Right ventricle myocardium inferior (tissue), 1 donor: ENCODE measurements at regions of chr1 and their contacts with region 1.

Region 1: DNA sequence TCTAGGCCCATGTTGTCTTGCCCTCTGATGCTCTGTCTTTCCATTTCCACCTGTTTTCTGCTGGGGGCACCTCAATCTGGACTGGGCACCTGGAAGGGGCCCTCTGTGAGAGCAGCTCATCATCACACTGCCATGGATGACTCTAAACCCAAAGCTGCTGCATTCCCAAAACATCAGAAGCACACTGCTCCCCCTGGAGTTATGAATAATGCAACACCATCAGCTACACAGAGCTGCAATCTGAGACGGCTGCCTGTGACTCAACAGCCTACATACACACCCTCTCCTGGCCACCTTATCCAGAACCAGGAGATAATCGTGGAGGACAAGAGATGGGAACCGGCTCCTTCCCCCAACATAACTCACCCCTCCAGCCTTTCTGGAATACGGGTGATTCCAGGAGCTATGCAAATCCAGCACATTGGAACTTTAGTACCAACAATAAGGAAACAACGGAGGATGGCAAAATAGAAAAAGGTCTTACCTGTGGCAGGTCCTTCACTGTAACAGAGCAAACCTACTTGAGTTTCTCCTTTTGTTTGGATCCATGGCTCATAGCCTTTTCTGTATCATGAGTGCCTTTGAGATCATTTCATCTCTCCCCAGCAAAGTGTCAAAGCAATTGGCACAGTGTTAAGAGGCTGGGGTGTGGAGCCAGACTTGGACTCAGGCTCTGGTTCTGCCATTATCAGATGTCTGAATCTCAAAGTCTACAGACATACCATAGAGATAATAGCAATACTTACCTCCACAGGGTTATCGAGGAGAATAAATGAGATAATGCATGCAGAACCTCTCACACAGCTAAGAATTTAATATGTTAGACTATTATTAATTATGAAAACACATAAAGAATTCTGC is 29.3 kb downstream of the AK2 start:
- DNase-seq: no peak
- ATAC-seq: peak; percentile 56

Region 2: GRCh38 chr1:32859915-32860314 is 147.5 kb before region 1 on chr1:
- intact Hi-C with region 1: no loop called
- DNase-seq: no peak
- ATAC-seq: no peak

Region 3: GRCh38 chr1:32964461-32965250 is 42.8 kb before region 1 on chr1 and contains the start of gene RNF19B:
- intact Hi-C with region 1: loop called (anchors 2 kb)
- DNase-seq: peak; percentile 97
- ATAC-seq: peak; percentile 99
- total RNA-seq, gene RNF19B: 15.5 TPM

Region 4: GRCh38 chr1:32992489-32993323 is 14.7 kb before region 1 on chr1:
- intact Hi-C with region 1: loop called (anchors 2 kb)
- DNase-seq: peak; percentile 87
- ATAC-seq: peak; percentile 73

Region 5: GRCh38 chr1:33036526-33037503 is 29.4 kb after region 1 on chr1 and contains the start of gene AK2:
- intact Hi-C with region 1: loop called (anchors 2 kb)
- DNase-seq: peak; percentile 98
- ATAC-seq: peak; percentile 100
- total RNA-seq, gene AK2: 129 TPM

Region 6: GRCh38 chr1:33055210-33056008 is 48.0 kb after region 1 on chr1:
- intact Hi-C with region 1: loop called (anchors 1 kb)
- DNase-seq: peak; percentile 86
- ATAC-seq: peak; percentile 97

Region 7: DNA sequence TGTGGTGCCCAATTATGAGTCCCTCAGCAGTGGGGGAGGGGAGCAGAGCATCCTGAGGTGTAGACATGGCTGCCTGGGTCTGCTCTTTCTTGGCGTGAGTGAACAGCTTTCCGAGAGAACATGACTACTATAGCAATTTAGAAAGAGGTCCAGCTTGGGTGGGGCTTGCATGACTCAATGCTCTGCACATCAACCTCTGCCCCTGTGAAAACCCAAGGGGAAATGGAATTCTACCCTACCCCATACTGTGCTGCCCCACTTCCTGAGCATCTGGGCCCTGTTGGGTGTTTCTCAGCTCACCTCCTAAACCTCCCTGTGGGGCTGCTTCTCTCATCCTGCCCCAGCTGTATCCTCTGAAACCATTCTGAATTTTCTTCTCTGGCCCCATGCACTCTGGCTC is 65.3 kb after region 1 on chr1:
- intact Hi-C with region 1: no loop called
- DNase-seq: no peak
- ATAC-seq: no peak